ENCODE measurements at regions of chr3 and their contacts with region 1.

Region 1: GRCh38 chr3:47009225-47010110 is 30.0 kb downstream of the NBEAL2 start:
- DNase-seq: peak; percentile 76

Region 2: DNA sequence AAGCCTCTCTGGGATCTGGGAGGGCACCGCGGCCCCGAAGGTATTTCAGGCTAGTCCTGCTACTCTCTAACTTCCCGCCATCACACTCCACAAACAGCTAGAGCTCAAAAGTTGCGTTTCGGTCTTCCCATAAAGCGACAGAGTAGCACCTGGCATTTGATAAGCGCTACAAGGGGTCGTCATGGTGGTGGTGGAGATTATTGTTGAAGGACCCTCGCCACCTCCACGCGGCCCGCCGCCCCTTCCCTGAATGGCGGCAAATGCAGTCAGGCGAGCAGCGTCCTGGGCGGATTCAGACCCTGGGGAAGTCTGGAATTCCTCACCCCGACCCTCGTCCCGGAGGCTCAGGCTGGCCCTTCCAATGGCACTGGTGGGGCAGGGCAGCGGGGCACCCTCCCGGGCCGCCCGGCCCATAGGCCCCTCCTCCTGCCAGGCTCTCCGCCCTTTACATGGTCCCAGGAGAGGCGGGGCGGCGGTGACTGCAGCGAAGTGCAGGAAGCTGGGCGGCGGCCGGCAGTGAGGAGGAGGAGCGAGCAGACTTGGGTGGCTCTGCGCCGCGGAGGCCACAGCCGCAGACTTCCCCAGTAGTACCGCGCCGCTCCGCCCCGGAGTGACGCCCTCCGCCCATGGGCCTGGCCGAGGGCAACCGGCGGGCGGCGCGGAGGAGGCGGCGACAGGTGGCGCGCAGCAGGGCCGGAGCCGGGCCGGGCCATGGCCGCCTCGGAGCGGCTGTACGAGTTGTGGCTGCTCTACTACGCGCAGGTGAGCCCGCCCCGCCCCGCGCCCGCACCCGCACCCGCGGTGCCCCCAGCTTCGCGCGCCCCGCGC is 30.1 kb before region 1 on chr3 and contains the start of gene NBEAL2:
- CTCF ChIA-PET with region 1: no interaction called
- POLR2A ChIA-PET with region 1: interaction called, 14 read pairs
- DNase-seq: peak; percentile 86

Region 3: DNA sequence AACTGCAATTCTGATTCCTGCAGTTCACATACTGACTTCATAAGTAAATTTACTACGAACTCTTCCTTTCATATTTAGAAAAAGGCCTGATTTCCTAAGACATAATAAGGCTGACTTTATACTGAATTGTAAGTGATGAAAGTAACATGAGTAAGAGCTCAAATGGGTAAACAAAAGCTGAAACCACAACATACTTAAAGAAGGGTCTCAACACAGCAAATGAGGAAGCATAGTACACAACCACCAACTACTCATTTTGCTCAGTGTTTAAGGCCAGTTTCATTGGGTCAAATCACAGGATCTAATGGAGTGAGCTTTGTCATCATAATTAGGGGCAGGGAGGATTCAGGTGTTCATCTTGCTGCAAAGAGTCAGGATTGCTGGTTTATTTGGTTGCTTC is 73.1 kb after region 1 on chr3:
- CTCF ChIA-PET with region 1: no interaction called
- POLR2A ChIA-PET with region 1: no interaction called
- DNase-seq: no peak

Measured in HEK293T (cell line).